ENCODE measurements at regions of chr6 and their contacts with region 1.

Region 1: DNA sequence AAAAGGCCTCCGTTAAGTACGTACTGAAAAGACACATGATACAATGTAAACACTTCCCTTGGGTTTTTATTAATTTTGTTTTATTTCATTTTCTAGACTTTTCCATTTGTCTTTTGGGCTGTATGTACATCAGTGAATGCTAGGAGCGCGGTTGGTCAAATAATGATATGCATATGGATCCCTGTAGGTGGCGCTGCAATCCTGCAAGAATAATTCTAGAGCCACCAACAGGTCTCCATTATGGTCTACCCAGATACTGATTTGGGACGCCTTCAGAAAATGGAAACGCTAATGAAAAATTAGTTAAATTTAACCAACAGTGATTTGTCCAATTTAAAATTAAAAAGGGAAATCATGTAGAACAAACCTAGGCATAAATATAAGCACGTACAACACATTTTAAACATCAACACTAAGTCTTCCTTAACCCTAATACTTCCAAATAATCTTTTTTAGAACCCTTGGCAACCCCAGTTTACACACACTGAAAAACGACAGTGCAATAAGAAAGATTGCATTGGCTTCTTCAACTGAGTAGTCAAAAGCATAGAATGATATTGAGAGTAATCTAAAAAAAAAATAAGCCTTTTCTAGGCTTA is 433.5 kb downstream of the RFPL4B start:
- DNase-seq: peak; percentile 81

Region 2: GRCh38 chr6:113858480-113859348 is 1078.1 kb after region 1 on chr6:
- intact Hi-C with region 1: loop called in 1 of 2 experiments (anchors 2 kb)
- DNase-seq: peak; percentile 95

Measured in posterior vena cava (tissue), 2 donors.